ENCODE measurements at regions of chr11 and their contacts with region 1.

Region 1: GRCh38 chr11:33065445-33066178 is 26.2 kb downstream of the TCP11L1 start:
- DNase-seq: peak; percentile 91
- H3K4me3 Mint-ChIP-seq: no peak overlapping the region
- H3K27ac Mint-ChIP-seq: no peak overlapping the region
- H3K4me1 Mint-ChIP-seq: peaks cover 32% of the 10 kb centered on the region
- H3K27me3 Mint-ChIP-seq: no peaks in the 10 kb centered on the region

Region 2: DNA sequence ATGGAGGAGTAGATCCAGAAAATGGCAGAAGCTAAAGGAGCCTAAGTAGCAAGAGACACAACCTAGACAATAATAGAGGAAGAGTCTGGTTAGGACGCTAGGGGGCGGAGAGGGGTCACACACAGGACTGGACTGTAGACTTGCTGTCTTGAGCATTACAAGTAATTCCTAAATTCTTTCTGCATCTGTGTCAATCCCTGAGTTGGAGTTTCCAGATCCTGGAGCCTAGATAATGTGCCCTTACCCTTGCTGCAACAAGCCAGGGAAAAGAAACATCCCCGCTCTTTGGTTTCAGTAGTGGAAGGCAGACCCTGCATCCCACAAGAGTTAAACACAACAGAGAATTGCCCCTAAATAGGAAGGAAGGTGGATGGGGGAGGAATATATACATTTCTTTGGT is 256.3 kb before region 1 on chr11:
- intact Hi-C with region 1: loop called (anchors 1 kb)
- DNase-seq: peak; percentile 85
- H3K4me3 Mint-ChIP-seq: no peak overlapping the region
- H3K27ac Mint-ChIP-seq: no peak overlapping the region
- H3K4me1 Mint-ChIP-seq: no peaks in the 10 kb centered on the region
- H3K27me3 Mint-ChIP-seq: peaks cover 9% of the 10 kb centered on the region

Region 3: GRCh38 chr11:32821517-32821916 is 244.1 kb before region 1 on chr11:
- intact Hi-C with region 1: loop called (anchors 5 kb)
- DNase-seq: no peak
- H3K4me3 Mint-ChIP-seq: peak overlapping the region; percentile 17
- H3K27ac Mint-ChIP-seq: peak overlapping the region; percentile 13
- H3K4me1 Mint-ChIP-seq: peaks cover 8% of the 10 kb centered on the region
- H3K27me3 Mint-ChIP-seq: no peaks in the 10 kb centered on the region

Region 4: GRCh38 chr11:33015621-33016551 is 49.7 kb before region 1 on chr11 and contains the start of gene DEPDC7:
- intact Hi-C with region 1: loop called (anchors 1 kb)
- DNase-seq: peak; percentile 93
- H3K4me3 Mint-ChIP-seq: peak within 1 kb of the TSS; percentile 84
- H3K27ac Mint-ChIP-seq: no peak within 1 kb of the TSS
- H3K4me1 Mint-ChIP-seq: peaks cover 16% of the 10 kb centered on the region
- H3K27me3 Mint-ChIP-seq: peaks cover 61% of the 10 kb centered on the region
- total RNA-seq, gene DEPDC7: 0.64 and 0.84 TPM in 2 replicates

Region 5: DNA sequence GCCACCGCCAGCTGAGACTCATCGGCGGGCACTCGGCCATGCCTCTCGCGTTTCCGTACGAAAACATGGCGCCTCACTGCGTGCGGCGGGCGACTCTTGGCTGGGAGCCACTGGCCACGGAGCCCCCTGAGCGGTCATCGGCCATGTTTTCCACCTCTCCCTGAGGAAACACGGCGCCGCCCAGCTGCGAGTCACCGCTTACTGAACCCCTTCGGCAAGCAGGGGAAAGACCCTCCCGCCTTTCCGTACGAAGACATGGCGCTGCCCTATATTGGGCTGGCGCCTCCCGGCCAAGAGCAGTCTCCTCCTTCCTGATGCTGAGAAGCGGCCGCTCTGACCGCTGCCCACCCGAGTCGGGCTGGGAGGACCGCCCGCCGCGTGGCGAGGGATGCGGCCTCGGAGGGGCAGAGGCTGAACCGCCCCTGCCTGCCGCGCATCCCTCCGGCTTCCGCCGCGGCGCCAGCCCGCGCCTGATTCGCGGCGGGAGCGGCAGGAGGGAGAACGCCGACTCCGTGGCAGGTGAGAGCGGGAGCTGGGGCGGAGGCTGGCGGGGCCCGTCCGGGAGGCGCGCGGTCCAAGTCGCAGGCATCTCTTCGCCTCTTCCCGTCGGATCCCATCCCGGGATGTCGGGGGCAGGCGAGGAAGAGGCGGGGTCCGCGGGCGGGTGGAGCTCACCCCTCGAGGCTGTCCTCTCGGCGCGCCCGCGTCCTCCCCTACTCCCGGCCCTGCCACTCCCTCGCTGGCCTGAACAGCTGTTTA is 26.2 kb before region 1 on chr11 and contains the start of gene TCP11L1:
- intact Hi-C with region 1: loop called (anchors 1 kb)
- DNase-seq: peak; percentile 94
- H3K4me3 Mint-ChIP-seq: peak within 1 kb of the TSS; percentile 93
- H3K27ac Mint-ChIP-seq: peak within 1 kb of the TSS; percentile 93
- H3K4me1 Mint-ChIP-seq: peaks cover 21% of the 10 kb centered on the region
- H3K27me3 Mint-ChIP-seq: peaks cover 12% of the 10 kb centered on the region
- total RNA-seq, gene TCP11L1: 12.5 and 14.4 TPM in 2 replicates

Region 6: GRCh38 chr11:33471541-33471940 is 405.9 kb after region 1 on chr11:
- intact Hi-C with region 1: no loop called
- DNase-seq: no peak
- H3K4me3 Mint-ChIP-seq: no peak overlapping the region
- H3K27ac Mint-ChIP-seq: no peak overlapping the region
- H3K4me1 Mint-ChIP-seq: no peaks in the 10 kb centered on the region
- H3K27me3 Mint-ChIP-seq: no peaks in the 10 kb centered on the region